Activated CD4-positive, alpha-beta T cell treated with anti-CD3 and anti-CD28 coated beads for 36 hours (primary cell): ENCODE measurements at regions of chr5 and their contacts with region 1.

Region 1: DNA sequence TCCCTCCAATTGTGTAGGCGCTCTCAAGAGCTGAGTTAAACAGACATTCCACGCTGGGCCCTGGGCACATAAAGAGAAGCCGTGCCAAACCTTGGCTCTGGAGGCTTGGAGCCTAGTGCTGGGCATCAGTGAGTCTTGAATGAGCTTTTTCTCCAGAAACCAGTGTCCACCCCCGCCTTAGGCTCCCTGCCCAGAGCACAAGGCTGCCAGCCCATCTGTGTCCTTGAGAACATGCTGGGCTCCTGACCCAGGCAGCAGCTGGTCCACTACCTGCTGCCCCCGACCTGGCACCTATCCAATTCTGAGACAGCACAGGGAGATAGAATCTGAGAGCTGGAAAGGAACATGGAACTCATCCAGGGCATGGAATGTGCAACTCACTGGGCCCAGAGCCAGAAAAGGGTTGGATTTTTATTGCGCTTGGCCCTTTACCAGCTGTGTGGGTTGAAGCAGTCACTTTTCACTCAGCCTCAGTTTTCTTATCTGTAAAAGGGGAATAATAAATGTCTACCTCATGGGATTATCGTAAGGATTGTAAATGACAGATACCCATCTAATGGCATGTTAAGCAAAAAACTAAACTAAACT is 92.3 kb upstream of the CPLX2 start:
- DNase-seq: no peak
- ATAC-seq: no peak
- H3K4me3 Mint-ChIP-seq: no peak overlapping the region
- H3K27ac Mint-ChIP-seq: no peak overlapping the region
- H3K4me1 Mint-ChIP-seq: no peaks in the 10 kb centered on the region
- H3K27me3 Mint-ChIP-seq: peaks cover 24% of the 10 kb centered on the region

Region 2: DNA sequence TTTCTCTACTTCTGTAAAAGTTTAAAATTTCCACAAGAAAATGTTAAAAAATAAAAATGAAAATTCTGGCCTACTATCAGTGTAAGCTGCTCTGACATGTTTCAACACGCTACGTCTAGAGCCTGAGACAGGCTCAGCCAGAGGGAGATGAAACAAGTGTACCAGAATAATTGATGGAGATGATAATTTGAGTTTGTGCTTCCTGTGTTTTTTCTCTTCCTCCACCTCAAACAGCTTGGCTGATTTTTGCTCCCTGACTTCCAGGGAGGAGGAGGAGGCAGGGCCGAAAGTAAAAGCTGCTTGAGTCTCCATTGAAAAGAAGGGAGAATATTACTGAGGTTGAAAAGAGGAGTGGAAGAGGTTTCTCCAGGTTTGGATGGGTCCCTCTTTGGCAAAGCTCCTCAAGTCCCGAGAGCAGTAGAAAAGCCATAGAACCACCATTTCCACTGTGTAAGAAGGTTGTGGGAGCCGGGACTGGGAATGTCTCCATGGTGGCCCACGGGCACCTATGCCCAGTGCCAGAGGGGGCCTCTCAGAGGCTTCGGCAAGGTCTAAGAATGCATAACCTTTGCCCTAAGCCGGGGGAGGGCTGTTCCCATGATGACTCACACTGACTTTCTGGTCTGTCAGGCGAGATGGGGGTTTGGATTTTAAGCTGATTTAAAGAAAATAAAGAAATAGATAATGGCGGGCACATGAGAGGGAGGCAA is 26.1 kb before region 1 on chr5:
- CTCF ChIA-PET with region 1: no interaction called
- POLR2A ChIA-PET with region 1: no interaction called
- intact Hi-C with region 1: loop called in 1 of 2 experiments (anchors 1 kb)
- DNase-seq: no peak
- ATAC-seq: no peak
- H3K4me3 Mint-ChIP-seq: no peak overlapping the region
- H3K27ac Mint-ChIP-seq: no peak overlapping the region
- H3K4me1 Mint-ChIP-seq: no peaks in the 10 kb centered on the region
- H3K27me3 Mint-ChIP-seq: peaks cover 53% of the 10 kb centered on the region